ENCODE measurements at regions of chr6 and their contacts with region 1.

Region 1: GRCh38 chr6:33958526-33959333 is 154.9 kb upstream of the MLN start:
- DNase-seq: no peak
- H3K4me3 ChIP-seq: no peak overlapping the region
- H3K27ac ChIP-seq: no peak overlapping the region
- H3K4me1 ChIP-seq: peaks cover 27% of the 10 kb centered on the region
- H3K27me3 ChIP-seq: no peaks in the 10 kb centered on the region
- CTCF ChIP-seq: peak; percentile 15 to 37

Region 2: GRCh38 chr6:33711140-33712129 is 247.3 kb before region 1 on chr6 and contains the start of gene UQCC2:
- CTCF ChIA-PET with region 1: no interaction called
- dilution Hi-C with region 1: no loop called
- in situ Hi-C with region 1: no loop called
- intact Hi-C with region 1: loop called (anchors 5 kb)
- DNase-seq: peak; percentile 93
- H3K4me3 ChIP-seq: peak within 1 kb of the TSS; percentile 81 to 97 (median 84)
- H3K27ac ChIP-seq: peak within 1 kb of the TSS; percentile 91
- H3K4me1 ChIP-seq: peaks cover 23% of the 10 kb centered on the region
- H3K27me3 ChIP-seq: no peaks in the 10 kb centered on the region
- CTCF ChIP-seq: peak; percentile 63 to 88
- total RNA-seq, gene UQCC2: 12.3 to 65.2 TPM